PC-9 (cell line): ENCODE measurements at regions of chrX and their contacts with region 1.

Region 1: GRCh38 chrX:136825771-136826170 is 45.0 kb upstream of the ARHGEF6 start:
- DNase-seq: no peak
- H3K4me3 ChIP-seq: no peak overlapping the region
- H3K27ac ChIP-seq: no peak overlapping the region
- H3K4me1 ChIP-seq: no peaks in the 10 kb centered on the region
- H3K27me3 ChIP-seq: no peaks in the 10 kb centered on the region
- CTCF ChIP-seq: no peak

Region 2: GRCh38 chrX:136767104-136767941 is 58.4 kb before region 1 on chrX:
- CTCF ChIA-PET with region 1: interaction called, 14 read pairs
- POLR2A ChIA-PET with region 1: no interaction called
- intact Hi-C with region 1: no loop called
- DNase-seq: peak in 1 of 2 experiments; percentile 16
- H3K4me3 ChIP-seq: peak overlapping the region; percentile 73
- H3K27ac ChIP-seq: no peak overlapping the region
- H3K4me1 ChIP-seq: peaks cover 12% of the 10 kb centered on the region
- H3K27me3 ChIP-seq: no peaks in the 10 kb centered on the region
- CTCF ChIP-seq: no peak; the same call in 1 of the 2 replicates